ENCODE measurements at regions of chr6 and their contacts with region 1.

Region 1: DNA sequence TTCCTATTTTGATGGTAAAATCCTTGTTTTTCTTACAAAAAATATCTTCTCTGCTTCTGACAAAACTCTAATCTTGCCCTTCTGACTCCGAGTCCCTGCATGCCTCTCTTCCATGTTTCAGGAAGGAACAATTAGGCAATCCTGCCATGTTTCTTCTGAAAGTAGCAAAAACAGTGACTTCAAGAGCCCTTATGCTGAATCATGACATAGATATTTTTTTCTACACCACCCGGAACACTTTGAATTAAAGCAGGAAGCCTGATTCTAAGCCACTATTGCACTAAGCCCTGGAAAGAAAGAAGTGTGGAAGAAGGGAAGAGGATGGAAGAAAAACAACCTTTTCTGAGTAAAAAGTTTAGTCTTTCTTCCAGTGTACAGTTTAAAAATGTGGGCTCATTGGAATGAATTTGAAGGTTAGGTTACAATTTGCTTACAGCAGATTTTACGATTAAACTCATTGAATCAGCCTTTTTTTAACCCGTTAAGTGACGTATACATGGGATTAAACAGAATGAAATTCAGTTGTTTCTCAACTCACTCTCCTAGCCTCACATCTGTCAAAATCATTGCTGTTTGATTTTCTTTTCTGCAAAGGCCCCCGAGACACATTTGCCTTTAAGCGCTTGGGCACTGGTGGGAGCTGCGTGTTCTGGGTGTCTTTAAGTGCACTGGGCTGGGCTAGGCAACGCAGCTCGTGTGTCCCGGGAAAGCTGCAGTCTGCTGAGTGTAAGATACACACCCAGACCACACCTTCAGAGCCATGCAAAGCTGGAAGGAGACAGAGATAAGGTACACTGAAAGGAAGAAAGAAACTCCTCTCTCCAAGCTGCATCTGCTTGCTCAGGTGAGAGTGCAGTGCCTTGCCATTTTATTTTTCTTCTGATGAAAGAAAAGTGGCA is 159.4 kb upstream of the CITED2 start:
- DNase-seq: no peak
- H3K4me3 Mint-ChIP-seq: no peak overlapping the region
- H3K27ac Mint-ChIP-seq: peak overlapping the region; percentile 82
- H3K4me1 Mint-ChIP-seq: peaks cover 52% of the 10 kb centered on the region
- H3K27me3 Mint-ChIP-seq: no peaks in the 10 kb centered on the region

Region 2: GRCh38 chr6:139392794-139393193 is 141.0 kb before region 1 on chr6:
- intact Hi-C with region 1: no loop called
- DNase-seq: no peak
- H3K4me3 Mint-ChIP-seq: no peak overlapping the region
- H3K27ac Mint-ChIP-seq: no peak overlapping the region
- H3K4me1 Mint-ChIP-seq: no peaks in the 10 kb centered on the region
- H3K27me3 Mint-ChIP-seq: no peaks in the 10 kb centered on the region

Region 3: GRCh38 chr6:139515511-139515910 is 18.3 kb before region 1 on chr6:
- intact Hi-C with region 1: loop called (anchors 2 kb)
- DNase-seq: no peak
- H3K4me3 Mint-ChIP-seq: no peak overlapping the region
- H3K27ac Mint-ChIP-seq: no peak overlapping the region
- H3K4me1 Mint-ChIP-seq: peaks cover 13% of the 10 kb centered on the region
- H3K27me3 Mint-ChIP-seq: peaks cover 6% of the 10 kb centered on the region

Region 4: GRCh38 chr6:139600919-139601475 is 67.2 kb after region 1 on chr6:
- intact Hi-C with region 1: loop called (anchors 2 kb)
- DNase-seq: no peak
- H3K4me3 Mint-ChIP-seq: no peak overlapping the region
- H3K27ac Mint-ChIP-seq: peak overlapping the region; percentile 57
- H3K4me1 Mint-ChIP-seq: peaks cover 5% of the 10 kb centered on the region
- H3K27me3 Mint-ChIP-seq: peaks cover 1% of the 10 kb centered on the region

Region 5: DNA sequence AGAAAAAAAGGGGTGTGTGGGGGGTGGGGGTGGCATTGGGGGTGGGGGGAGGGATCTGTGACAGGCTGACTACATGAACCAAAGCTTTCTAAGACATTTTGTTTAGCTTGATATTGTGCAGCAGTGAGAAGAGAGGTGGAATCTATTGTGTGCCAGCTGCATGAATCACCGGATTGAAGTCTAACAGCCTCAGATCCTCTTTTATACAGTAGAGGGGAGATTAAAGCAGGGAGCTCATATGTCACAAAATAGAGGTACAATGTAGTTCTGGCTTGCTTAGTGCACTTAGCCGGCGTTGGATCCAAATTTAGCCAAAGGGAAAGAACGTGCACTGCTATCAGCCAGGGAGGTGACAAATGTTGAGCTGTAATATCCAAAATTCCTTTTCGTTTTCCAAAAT is 244.9 kb after region 1 on chr6:
- intact Hi-C with region 1: no loop called
- DNase-seq: no peak
- H3K4me3 Mint-ChIP-seq: no peak overlapping the region
- H3K27ac Mint-ChIP-seq: no peak overlapping the region
- H3K4me1 Mint-ChIP-seq: no peaks in the 10 kb centered on the region
- H3K27me3 Mint-ChIP-seq: peaks cover 4% of the 10 kb centered on the region